ENCODE measurements at regions of chrX and their contacts with region 1.

Region 1: DNA sequence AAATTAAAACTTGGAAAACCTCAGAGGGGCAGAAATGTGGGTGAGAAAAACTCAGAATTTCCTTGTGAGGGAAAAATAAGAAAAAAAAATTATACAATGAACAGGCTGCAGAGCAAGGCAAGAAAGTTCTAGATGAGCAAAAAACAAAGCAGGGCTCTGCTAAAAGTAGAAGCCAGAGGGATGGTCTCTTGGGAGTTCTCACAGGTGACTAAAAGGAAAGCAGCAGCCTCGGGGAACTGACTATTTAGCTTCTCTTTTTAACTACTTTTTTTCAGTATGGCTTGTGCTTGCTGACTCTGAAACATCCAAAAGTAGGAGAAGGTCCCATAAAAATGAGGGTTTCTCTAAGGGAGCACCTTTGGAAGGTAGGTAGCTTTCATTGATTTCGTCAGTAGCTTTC is 36.4 kb downstream of the PCDH19 start:
- DNase-seq: no peak
- H3K4me3 ChIP-seq: no peak overlapping the region
- H3K27ac ChIP-seq: no peak overlapping the region
- H3K4me1 ChIP-seq: no peaks in the 10 kb centered on the region
- H3K27me3 ChIP-seq: peaks cover 5% of the 10 kb centered on the region
- CTCF ChIP-seq: no peak

Region 2: DNA sequence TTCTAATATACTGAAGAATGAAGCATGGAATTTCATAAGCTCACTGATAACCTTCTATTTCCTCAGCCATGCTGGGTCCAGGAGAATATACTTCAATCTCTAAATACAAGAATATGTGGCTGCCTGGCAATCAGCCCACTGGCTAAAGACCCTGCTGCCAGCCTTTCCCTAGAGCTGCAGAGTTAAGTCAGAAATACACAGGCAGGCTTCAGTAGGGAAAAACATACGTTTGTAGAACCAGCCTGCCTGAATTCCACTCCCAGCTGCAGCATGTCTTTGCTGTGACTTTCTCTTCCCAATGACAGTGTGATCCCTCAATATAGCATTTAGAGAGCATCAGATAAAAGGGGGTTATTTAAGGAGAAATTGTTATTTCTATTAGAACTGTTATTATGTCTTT is 252.7 kb before region 1 on chrX:
- CTCF ChIA-PET with region 1: interaction called, 18 read pairs
- dilution Hi-C with region 1: no loop called
- in situ Hi-C with region 1: no loop called
- intact Hi-C with region 1: no loop called
- DNase-seq: no peak
- H3K4me3 ChIP-seq: no peak overlapping the region
- H3K27ac ChIP-seq: no peak overlapping the region
- H3K4me1 ChIP-seq: no peaks in the 10 kb centered on the region
- H3K27me3 ChIP-seq: no peaks in the 10 kb centered on the region
- CTCF ChIP-seq: no peak

Region 3: GRCh38 chrX:100404851-100405250 is 31.2 kb after region 1 on chrX:
- CTCF ChIA-PET with region 1: no interaction called
- dilution Hi-C with region 1: no loop called
- in situ Hi-C with region 1: no loop called
- intact Hi-C with region 1: no loop called
- DNase-seq: no peak
- H3K4me3 ChIP-seq: no peak overlapping the region
- H3K27ac ChIP-seq: no peak overlapping the region
- H3K4me1 ChIP-seq: no peaks in the 10 kb centered on the region
- H3K27me3 ChIP-seq: peaks cover 12% of the 10 kb centered on the region
- CTCF ChIP-seq: no peak

Measured in mammary epithelial cell (primary cell).